Activated naive CD4-positive, alpha-beta T cell treated with anti-CD3 and anti-CD28 coated beads, Interleukin-2, amount 10 ng/mL, durations not matched to agents 7 days and 5 days (primary cell): ENCODE measurements at regions of chr2 and their contacts with region 1.

Region 1: GRCh38 chr2:106160786-106161261 is 33.3 kb downstream of the UXS1 start:
- DNase-seq: peak; percentile 66
- H3K4me3 Mint-ChIP-seq: peak overlapping the region; percentile 81
- H3K27ac Mint-ChIP-seq: peak overlapping the region; percentile 98
- H3K4me1 Mint-ChIP-seq: peaks cover 86% of the 10 kb centered on the region
- H3K27me3 Mint-ChIP-seq: no peaks in the 10 kb centered on the region

Region 2: GRCh38 chr2:106108351-106108750 is 52.5 kb before region 1 on chr2:
- CTCF ChIA-PET with region 1: interaction called, 11 read pairs
- DNase-seq: no peak
- H3K4me3 Mint-ChIP-seq: no peak overlapping the region
- H3K27ac Mint-ChIP-seq: no peak overlapping the region
- H3K4me1 Mint-ChIP-seq: peaks cover 4% of the 10 kb centered on the region
- H3K27me3 Mint-ChIP-seq: no peaks in the 10 kb centered on the region

Region 3: GRCh38 chr2:106143495-106144215 is 17.2 kb before region 1 on chr2:
- CTCF ChIA-PET with region 1: interaction called, 30 read pairs
- DNase-seq: no peak
- H3K4me3 Mint-ChIP-seq: no peak overlapping the region
- H3K27ac Mint-ChIP-seq: peak overlapping the region; percentile 49
- H3K4me1 Mint-ChIP-seq: peaks cover 71% of the 10 kb centered on the region
- H3K27me3 Mint-ChIP-seq: no peaks in the 10 kb centered on the region

Region 4: DNA sequence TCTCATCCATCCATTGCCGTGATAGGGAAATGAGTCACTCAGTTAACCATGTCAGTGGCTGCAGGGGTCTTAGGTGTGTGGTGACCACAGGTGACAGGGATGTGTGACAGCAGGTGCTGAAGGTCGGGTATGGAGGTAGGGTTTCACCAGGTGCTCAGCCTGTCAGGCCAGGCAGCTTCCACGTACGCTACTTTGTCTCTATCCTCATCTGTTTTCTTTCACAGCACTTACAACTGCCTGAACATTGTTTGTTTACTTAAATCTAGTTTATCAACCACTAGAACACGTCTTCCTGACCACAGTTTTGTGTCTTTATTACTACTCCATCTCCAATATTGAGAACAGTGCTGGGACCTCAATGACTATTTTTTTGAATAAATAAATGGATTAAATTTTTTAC is 44.7 kb after region 1 on chr2:
- CTCF ChIA-PET with region 1: no interaction called
- DNase-seq: no peak
- H3K4me3 Mint-ChIP-seq: no peak overlapping the region
- H3K27ac Mint-ChIP-seq: no peak overlapping the region
- H3K4me1 Mint-ChIP-seq: peaks cover 7% of the 10 kb centered on the region
- H3K27me3 Mint-ChIP-seq: peaks cover 20% of the 10 kb centered on the region